Activated B cell treated with CpG ODN at 0.5 μM for 24 hours (primary cell): ENCODE measurements at regions of chr3 and their contacts with region 1.

Region 1: GRCh38 chr3:184727357-184728009 is 15.6 kb upstream of the MAGEF1 start:
- DNase-seq: no peak
- ATAC-seq: peak; percentile 70
- H3K4me3 Mint-ChIP-seq: no peak overlapping the region
- H3K27ac Mint-ChIP-seq: no peak overlapping the region
- H3K4me1 Mint-ChIP-seq: no peaks in the 10 kb centered on the region
- H3K27me3 Mint-ChIP-seq: peaks cover 4% of the 10 kb centered on the region
- CTCF ChIP-seq: no peak

Region 2: DNA sequence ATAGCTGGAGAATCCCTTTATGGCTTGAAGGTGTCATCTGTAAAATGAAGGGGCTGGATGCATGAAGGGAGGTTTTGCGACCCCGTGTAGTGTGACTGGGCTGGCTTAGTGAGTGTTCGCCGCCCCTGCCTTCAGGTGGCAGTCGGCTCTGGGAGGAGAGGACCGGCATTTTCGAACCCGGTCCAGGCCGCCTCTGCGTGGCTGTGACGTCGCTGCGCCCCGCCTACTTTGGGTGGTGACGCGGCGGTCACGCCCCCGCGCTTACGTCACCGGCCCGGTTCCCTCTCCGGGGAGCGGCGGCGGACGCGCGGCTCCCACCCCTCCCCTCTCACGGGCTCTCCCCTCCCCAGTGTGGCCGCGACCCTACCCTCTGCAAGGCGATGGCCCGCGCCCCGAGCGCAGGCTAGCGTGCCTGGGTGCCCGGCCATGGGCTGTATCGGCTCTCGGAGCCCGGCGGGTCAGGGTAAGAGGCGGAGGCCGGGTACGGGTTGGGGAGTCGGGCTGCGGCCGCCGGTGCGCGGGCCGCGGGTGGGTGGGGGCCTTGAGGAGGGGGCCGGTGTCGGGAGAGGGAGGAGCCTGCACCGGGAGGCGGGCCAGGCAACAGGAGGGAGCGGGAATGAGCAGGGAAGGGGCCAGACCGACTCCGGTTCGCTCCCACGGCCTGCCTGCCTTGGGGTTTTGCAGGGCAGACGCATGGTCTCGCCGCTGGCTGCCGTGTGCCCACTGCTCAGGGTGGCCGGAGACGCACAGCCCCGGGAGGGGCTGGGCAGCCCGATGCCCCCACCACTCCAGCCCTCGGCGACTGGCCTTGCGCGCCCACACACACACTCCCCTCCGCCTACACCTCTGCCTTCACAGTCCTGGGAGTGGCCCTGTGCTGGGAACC is 391.6 kb before region 1 on chr3:
- CTCF ChIA-PET with region 1: no interaction called
- POLR2A ChIA-PET with region 1: no interaction called
- intact Hi-C with region 1: no loop called
- DNase-seq: peak; percentile 92
- ATAC-seq: peak; percentile 79
- H3K4me3 Mint-ChIP-seq: peak overlapping the region; percentile 84
- H3K27ac Mint-ChIP-seq: peak overlapping the region; percentile 85
- H3K4me1 Mint-ChIP-seq: peaks cover 33% of the 10 kb centered on the region
- H3K27me3 Mint-ChIP-seq: peaks cover 5% of the 10 kb centered on the region
- CTCF ChIP-seq: no peak

Region 3: GRCh38 chr3:184347321-184348056 is 380.0 kb before region 1 on chr3:
- CTCF ChIA-PET with region 1: no interaction called
- POLR2A ChIA-PET with region 1: no interaction called
- intact Hi-C with region 1: no loop called
- DNase-seq: no peak
- ATAC-seq: no peak
- H3K4me3 Mint-ChIP-seq: no peak overlapping the region
- H3K27ac Mint-ChIP-seq: no peak overlapping the region
- H3K4me1 Mint-ChIP-seq: no peaks in the 10 kb centered on the region
- H3K27me3 Mint-ChIP-seq: no peaks in the 10 kb centered on the region
- CTCF ChIP-seq: no peak

Region 4: DNA sequence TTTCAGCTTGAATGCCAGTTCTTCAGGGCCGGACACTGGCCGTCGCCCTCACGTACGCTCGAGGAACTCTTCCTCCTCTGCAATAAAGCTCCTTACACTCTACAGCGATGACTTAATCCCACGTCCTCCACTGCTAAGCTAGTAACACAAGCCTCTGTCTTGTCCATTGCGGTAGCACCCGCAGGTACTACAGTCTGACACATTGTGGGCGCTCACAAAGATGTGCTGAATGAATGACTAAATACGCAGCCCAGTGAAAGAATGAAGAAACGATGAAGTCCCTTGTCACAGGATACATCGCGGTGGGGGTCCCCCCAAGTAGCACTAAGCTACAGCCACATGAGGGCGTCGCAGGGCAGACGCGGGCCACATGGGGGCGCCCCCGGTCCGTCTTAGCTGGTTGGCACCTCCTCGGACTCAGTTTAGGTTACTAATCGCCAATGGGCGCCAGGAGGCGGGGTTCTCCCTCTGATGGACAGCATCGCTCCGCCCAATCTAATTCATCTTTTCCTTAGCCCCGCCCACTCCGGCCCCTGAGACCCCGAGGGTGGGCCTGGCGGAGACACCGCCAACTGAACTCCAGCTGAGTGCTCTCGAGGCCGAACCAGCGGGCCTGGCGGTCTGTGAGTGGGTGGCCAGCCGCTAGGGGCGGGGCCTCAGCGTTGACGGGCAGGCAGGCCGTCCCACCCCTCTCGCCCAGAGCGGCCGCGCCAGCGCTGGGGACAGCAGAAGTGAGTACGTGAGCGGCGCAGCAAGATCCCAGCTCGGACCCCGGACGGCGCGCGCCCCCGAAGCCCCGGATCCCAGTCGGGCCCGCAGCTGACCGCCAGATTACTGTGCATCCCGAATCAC is 166.2 kb before region 1 on chr3 and contains the start of gene EPHB3:
- CTCF ChIA-PET with region 1: interaction called, 6 read pairs
- POLR2A ChIA-PET with region 1: no interaction called
- intact Hi-C with region 1: loop called (anchors 1 kb)
- DNase-seq: peak; percentile 89
- ATAC-seq: peak; percentile 93
- H3K4me3 Mint-ChIP-seq: peak within 1 kb of the TSS; percentile 77
- H3K27ac Mint-ChIP-seq: no peak within 1 kb of the TSS
- H3K4me1 Mint-ChIP-seq: peaks cover 15% of the 10 kb centered on the region
- H3K27me3 Mint-ChIP-seq: peaks cover 40% of the 10 kb centered on the region
- CTCF ChIP-seq: peak; percentile 67
- total RNA-seq, gene EPHB3: 0.05 and 0.07 TPM in 2 replicates

Region 5: DNA sequence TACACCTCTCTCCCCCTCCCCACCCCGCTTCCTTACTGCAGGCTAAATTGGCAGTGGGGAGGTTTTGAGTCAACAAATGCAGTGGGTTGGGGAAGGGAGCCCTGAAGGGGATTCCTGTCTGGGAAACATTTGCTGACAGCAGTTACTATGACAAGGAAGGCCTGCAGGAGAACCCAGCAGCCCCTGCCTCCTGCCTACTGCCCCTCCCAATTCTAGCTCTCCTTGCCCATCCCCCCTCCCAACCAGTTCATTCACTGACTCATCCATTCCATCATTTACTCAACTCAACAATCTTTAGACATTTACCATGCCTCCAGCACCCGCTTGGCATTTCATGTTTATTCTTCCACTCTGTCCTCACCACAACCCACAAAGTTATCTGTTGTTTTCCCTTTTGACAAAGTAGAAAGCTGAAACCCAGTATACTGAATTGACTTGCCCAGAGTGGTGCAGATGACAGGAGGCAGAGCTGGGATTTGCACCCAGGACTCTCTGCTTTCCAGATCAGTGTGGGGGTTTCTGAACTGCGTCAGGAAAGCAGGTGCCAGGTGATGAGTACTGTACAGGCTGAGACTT is 90.7 kb before region 1 on chr3:
- CTCF ChIA-PET with region 1: no interaction called
- POLR2A ChIA-PET with region 1: no interaction called
- intact Hi-C with region 1: loop called (anchors 5 kb)
- DNase-seq: no peak
- ATAC-seq: no peak
- H3K4me3 Mint-ChIP-seq: no peak overlapping the region
- H3K27ac Mint-ChIP-seq: no peak overlapping the region
- H3K4me1 Mint-ChIP-seq: no peaks in the 10 kb centered on the region
- H3K27me3 Mint-ChIP-seq: peaks cover 16% of the 10 kb centered on the region
- CTCF ChIP-seq: no peak